ENCODE measurements at regions of chr1 and their contacts with region 1.

Region 1: GRCh38 chr1:200302192-200302920 is 107.5 kb downstream of the ZNF281 start:
- DNase-seq: peak; percentile 11 to 13
- ATAC-seq: peak; percentile 66 to 87 (median 74)
- H3K4me3 ChIP-seq: peak overlapping the region; percentile 40 to 83 (median 73)
- H3K27ac ChIP-seq: peak overlapping the region in 5 of 10 donors; percentile 1 to 64 (median 43)
- H3K4me1 ChIP-seq: peaks cover 0 to 19% (median 6%) of the 10 kb centered on the region in 9 donors
- H3K27me3 ChIP-seq: peaks cover 0 to 17% (median 6%) of the 10 kb centered on the region in 7 donors
- CTCF ChIP-seq: peak in 3 of 9 donors; percentile 23 to 29 (median 28)

Region 2: GRCh38 chr1:199954699-199955098 is 347.7 kb before region 1 on chr1:
- intact Hi-C with region 1: loop called in 3 of 10 experiments (anchors 2 to 10 kb)
- DNase-seq: no peak
- ATAC-seq: peak in 2 of 8 donors; percentile 56 to 61
- H3K4me3 ChIP-seq: no peak overlapping the region
- H3K27ac ChIP-seq: no peak overlapping the region
- H3K4me1 ChIP-seq: no peaks in the 10 kb centered on the region
- H3K27me3 ChIP-seq: no peaks in the 10 kb centered on the region
- CTCF ChIP-seq: peak; percentile 15 to 58 (median 40)

Region 3: DNA sequence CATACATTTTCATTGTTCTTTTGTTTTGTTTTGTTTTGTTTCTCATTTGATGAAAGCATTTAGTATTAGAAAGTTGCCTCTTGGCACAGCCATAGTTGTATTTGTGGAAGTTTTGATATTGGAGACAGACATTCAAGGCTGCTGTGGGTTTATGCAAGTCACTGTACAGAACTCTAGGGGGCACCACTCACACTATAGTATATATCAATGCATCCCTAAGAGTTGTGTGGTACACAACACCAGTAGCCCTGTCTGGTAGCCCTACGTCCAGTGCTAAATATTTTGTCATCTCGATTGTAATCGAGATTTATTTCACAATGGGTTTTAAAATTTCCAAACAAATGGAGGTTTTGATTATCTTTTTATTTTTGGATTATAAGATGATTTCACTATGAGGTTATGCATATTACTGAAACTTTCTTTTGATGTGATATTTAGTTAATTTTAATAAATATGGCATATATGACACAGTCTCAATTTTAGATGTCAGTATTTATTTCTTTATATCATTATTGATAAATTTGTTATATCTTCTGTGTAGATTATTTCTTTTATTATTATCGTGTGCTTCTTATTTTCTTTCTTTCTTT is 162.6 kb before region 1 on chr1:
- intact Hi-C with region 1: loop called in 2 of 10 experiments (anchors 10 kb)
- DNase-seq: peak in 1 of 2 donors; percentile 4
- ATAC-seq: peak in 1 of 8 donors; percentile 55
- H3K4me3 ChIP-seq: no peak overlapping the region
- H3K27ac ChIP-seq: no peak overlapping the region
- H3K4me1 ChIP-seq: peaks cover 0 to 10% (median 0%) of the 10 kb centered on the region in 9 donors
- H3K27me3 ChIP-seq: no peaks in the 10 kb centered on the region
- CTCF ChIP-seq: peak in 7 of 9 donors; percentile 40 to 70 (median 53)

Region 4: DNA sequence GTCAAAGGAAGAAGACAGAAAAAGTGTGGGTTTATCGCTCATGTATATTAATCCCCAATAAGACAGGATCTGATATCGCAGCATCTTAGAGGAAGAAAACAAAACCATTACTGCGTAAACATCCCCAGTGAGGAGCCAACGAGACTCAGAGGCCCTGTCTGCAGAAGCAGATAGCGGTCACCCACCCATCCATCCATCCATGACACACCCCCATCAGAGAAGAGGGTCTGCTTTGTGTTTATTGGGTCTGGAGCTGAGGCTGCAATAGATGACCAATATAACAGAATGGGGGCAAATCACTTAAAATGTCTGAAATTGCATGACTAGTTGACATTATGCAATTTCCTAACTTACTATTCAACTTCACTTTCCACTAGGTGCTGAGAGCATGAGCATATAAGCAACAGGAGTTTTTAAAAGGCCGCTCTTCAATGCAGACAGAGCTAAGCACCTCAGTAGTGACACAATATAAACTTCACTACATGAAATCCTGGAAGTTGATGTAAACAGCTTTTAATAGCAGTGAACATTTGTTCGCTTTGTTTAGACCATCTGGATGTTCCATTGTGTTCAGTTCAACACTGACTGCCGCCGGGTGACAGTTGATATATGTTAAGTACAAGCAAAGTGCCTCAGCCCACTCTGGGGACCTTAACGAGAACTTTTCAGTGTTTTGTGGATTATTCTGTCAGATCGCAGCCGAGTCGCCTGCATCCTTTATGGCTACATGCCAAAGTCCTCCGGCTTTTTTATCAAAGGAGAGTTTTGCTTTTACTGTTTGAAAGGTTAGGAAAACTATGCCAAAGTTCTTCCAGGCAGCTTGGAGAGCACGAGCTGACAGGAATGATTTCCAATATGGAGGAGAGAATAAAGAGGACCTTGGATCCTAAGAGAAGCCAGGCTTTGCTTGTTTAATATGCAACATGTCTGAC is 60.0 kb before region 1 on chr1:
- intact Hi-C with region 1: no loop called
- DNase-seq: peak in 1 of 2 donors; percentile 32
- ATAC-seq: peak in 7 of 8 donors; percentile 61 to 94 (median 82)
- H3K4me3 ChIP-seq: peak overlapping the region in 7 of 10 donors; percentile 4 to 30 (median 21)
- H3K27ac ChIP-seq: peak overlapping the region in 9 of 10 donors; percentile 29 to 80 (median 57)
- H3K4me1 ChIP-seq: peaks cover 3 to 32% (median 15%) of the 10 kb centered on the region in 9 donors
- H3K27me3 ChIP-seq: peaks cover 0 to 11% (median 0%) of the 10 kb centered on the region in 7 donors
- CTCF ChIP-seq: no peak